Right ventricle myocardium inferior (tissue), 1 donor: ENCODE measurements at regions of chr7 and their contacts with region 1.

Region 1: DNA sequence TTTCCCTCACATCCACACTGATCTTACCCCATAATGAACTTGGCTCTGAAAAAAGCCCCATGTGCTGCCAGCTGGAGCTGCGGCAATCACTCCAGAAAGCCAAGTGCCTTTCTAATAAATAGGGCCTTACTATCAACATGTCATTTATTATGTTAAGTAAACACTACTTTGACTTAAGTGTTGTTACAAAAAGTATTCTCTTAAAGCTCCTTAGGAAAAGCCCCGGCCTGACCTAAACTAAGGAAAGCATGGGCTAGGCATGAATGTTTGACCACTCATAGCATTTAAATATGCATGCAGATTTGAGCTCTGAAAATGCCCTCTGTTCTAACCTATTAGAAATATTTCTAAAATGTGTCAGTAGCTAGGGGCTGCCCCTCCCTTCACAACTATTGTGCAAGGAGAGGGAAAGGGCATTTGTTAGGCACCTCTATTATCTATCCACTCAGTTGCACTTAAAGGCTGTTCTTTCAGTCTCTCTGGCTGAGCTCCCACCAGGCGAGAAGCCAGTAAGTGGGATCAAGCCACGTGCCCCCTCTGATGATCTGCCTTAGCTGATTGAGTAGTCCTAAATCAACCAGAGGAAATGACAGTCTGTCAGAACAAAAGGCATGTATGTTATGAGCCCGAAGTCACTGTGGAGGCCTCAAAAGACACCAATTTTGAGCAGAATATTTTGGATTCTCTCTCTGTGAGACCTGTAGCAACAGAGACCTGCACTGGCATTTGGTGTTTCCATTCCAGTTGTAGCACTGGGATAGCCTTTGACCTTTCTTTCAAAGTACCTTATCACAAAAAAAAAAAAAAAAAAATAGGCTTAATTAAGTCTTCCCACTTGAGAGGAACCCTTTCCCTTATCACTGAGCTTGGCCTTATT is 77.1 kb downstream of the ITGB8 start:
- DNase-seq: peak; percentile 83
- ATAC-seq: peak; percentile 90

Region 2: DNA sequence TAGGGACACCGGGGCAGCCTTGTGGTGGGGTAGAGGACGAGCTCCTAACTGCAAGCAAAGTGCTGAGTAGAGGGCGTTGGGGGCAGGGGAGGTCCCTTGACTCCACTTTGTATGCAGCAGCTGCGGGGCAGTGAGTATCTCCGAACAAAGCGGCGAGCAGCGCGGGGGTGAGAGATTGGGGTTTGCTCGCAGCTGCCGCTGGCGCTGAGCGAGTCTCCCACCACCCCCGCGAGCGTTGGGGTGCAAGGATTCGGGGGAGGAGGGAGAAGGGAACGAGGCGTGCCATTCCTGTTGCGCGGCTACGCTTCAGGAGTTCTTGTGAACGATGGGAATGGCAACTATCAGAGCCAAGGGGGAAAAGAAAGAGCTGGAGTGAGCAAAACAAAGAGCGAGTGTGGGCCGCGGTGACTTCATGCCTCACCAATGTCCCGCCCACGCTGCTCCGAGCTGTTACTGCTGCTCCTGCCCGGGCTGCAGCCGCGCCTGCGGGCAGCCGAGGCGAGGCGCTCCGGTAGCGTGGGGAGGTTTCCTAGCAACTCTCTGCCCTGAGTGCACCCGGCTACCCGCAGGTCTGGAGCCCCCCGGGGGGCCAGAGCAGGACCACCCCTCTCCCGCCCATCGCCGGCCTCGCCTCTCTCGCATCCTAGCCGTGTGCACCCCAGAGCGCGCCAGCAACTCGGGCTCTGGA is 77.4 kb before region 1 on chr7 and contains the start of gene ITGB8:
- intact Hi-C with region 1: loop called (anchors 5 kb)
- DNase-seq: peak; percentile 92
- ATAC-seq: peak; percentile 94
- total RNA-seq, gene ITGB8: 2.5 TPM

Region 3: DNA sequence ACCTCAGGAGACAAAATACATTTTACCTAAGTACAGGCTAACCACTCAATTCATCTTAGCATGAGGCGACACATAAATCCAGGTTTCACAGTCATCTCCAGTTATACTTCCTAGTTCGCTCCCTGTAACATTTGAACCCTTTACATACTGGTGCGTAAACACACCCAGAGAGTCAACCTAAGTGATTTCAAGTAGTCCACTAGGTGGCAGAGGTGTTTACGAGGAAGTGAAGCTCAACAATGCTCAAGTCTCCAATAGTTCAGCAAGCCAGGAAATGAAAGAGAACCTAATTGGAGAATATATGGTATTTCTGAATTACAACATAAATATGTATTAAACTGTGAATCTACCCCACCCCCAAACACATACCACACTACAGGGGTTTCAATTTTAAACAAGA is 131.4 kb after region 1 on chr7:
- intact Hi-C with region 1: no loop called
- DNase-seq: no peak
- ATAC-seq: no peak

Region 4: DNA sequence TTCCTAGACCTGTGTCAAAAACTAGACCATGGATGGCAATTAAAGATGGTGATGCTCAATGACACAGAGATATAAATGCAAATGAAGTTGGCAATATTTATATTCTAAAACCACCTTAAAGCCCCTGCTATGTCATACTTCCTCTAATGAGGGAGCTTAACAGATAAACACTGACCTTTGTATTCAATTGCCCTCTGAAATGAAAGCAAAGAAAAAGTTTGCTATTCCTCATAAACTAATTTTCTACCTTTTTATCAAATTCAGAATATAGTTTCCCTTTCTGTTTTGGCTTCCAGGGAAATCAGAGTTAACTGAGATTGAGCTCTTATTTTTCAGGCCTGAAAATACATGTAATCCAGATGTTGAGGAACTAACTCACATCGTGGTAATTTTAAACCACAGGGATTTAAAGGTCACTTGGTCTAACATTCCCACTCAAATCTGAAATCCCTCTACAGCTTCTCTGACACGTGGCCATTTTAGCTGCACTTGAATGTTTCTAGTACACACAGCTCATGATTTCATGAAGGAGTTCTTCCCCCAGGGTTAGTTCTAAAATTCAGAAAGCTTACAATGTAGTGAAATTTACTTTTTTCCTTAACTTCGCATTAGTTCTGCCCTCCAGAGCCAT is 169.7 kb after region 1 on chr7:
- intact Hi-C with region 1: loop called (anchors 2 kb)
- DNase-seq: no peak
- ATAC-seq: no peak